ENCODE measurements at regions of chr3 and their contacts with region 1.

Region 1: GRCh38 chr3:14388201-14388600 is 14.2 kb upstream of the SLC6A6 start:
- DNase-seq: no peak

Region 2: GRCh38 chr3:14261229-14261628 is 127.0 kb before region 1 on chr3:
- intact Hi-C with region 1: loop called in 1 of 2 experiments (anchors 10 kb)
- DNase-seq: peak; percentile 95

Region 3: GRCh38 chr3:14525685-14526631 is 137.8 kb after region 1 on chr3:
- intact Hi-C with region 1: no loop called
- DNase-seq: peak; percentile 79